GM12878 (cell line): ENCODE measurements at regions of chr6 and their contacts with region 1.

Region 1: DNA sequence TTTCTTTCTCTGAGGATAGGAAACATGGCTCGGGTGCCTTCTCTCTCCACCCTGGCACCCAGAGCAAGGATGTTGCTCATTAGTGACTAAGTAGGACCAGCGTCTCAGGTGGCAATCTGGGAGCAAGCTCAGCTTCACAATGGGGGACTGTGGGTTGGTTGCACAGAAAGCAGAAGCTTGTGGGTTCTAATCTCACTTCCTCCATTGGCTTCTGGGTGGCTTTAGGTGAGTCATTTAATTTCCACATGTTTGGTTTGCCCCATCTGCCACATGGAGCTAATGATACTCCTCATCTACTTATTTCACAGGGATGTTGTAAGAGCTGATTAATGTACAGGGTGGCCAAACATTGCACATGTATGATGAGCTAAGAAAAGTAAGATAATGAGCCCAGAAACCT is 54.8 kb upstream of the AKIRIN2 start:
- DNase-seq: peak; percentile 97
- ATAC-seq: peak; percentile 93
- H3K4me3 ChIP-seq: no peak overlapping the region
- H3K27ac ChIP-seq: peak overlapping the region; percentile 75
- H3K4me1 ChIP-seq: peaks cover 37% of the 10 kb centered on the region
- H3K27me3 ChIP-seq: no peaks in the 10 kb centered on the region
- CTCF ChIP-seq: no peak
- EP300 ChIP-seq: peak; percentile 90 to 93
- POLR2A ChIP-seq: no peak
- RAD21 ChIP-seq: peak; percentile 16; the same call in 1 of the 2 replicates

Region 2: DNA sequence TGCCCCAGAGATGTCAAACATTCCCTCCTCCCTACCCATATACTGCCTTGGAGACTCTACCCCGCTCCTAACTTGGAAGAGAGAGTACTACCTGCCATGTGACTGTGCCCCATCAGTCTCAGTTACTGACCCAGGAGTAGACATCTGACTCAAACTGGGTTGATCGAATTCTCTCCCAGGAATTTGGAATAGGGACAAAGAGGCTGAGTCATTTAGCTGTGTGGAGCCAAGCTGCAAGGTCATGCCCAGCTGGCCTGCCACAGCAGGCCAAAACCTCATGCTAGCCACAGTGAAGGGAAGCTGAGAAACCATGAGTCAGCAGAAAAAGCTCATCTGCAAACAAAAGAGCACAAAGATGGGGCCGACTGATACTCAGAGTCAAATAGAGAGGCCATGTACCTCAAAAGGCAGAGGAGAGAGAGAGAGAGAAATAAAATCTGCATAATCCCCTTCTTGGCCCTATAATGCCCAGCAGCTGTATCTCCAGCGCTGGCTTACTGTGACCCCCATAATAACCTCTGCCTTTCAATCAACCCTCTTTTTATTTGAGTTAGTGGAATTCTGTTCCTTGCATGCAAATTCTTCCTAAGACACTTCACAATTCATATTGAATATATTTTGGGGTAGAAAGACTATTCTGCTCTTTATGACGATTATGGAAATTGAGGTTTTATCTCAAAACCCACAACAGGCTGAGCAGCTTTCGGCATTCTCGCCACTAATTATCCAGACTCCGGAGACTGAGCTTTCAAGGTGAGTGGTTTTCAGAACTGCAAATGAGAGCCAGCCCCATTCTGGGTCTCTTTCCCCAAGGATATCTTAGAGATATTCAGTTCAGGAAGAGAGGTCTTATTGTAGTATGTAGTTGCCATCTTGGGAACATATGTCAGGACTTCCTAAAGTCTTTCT is 33.4 kb before region 1 on chr6:
- CTCF ChIA-PET with region 1: interaction called, 6 read pairs
- POLR2A ChIA-PET with region 1: interaction called, 16 read pairs
- RAD21 ChIA-PET with region 1: interaction called, 15 read pairs
- SMC1A ChIA-PET with region 1: interaction called, 18 read pairs
- in situ Hi-C with region 1: no loop called
- intact Hi-C with region 1: no loop called
- DNase-seq: peak; percentile 77
- ATAC-seq: peak; percentile 77
- H3K4me3 ChIP-seq: peak overlapping the region; percentile 23; the same call in 1 of the 2 replicates
- H3K27ac ChIP-seq: peak overlapping the region; percentile 92
- H3K4me1 ChIP-seq: peaks cover 38% of the 10 kb centered on the region
- H3K27me3 ChIP-seq: no peaks in the 10 kb centered on the region
- CTCF ChIP-seq: no peak
- EP300 ChIP-seq: peak; percentile 26 to 49; a peak in 2 of 4 replicates
- POLR2A ChIP-seq: no peak
- RAD21 ChIP-seq: no peak

Region 3: DNA sequence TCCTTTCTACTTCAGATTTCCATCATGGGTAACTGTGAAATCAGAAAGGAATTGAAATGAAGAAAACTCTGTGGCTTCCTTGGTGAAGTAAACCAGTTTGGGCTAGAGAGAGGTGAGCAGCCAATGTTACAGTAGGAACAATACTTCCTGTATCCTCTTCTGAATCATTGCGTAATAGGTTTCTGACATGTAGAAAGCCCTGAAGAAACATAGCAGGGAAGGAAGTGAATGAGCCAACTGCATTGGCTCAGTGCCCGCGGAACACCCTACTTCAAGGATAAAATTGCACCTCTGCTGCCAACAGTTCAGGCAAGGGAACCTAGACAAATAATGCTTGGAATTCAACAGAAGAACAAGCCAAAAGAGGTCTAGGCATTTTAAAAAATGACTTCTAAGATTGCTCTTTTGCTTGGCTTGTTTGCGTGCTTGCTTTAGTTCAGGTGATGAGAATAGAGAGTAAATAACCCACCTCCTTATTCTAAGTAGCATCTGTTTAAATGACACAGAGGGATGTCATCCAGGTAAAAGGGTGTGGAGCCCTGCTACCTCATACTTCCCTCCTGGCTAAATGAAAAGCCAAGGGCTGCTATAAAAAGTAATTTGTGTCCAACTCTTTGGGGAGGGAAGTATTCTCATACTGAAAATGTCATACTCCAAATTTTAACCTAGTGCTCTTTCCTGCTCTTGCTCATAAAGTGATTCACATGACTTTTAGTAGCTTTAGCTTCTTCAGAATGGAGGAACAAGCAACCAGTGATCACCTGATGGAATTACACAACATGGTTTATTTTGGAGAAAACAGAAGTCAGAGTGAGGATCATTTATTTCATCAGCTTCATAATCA is 24.8 kb before region 1 on chr6:
- CTCF ChIA-PET with region 1: interaction called, 3 read pairs
- POLR2A ChIA-PET with region 1: interaction called, 19 read pairs
- RAD21 ChIA-PET with region 1: interaction called, 9 read pairs
- SMC1A ChIA-PET with region 1: interaction called, 62 read pairs
- in situ Hi-C with region 1: no loop called
- intact Hi-C with region 1: loop called (anchors 2 kb)
- DNase-seq: peak; percentile 71
- ATAC-seq: peak; percentile 87
- H3K4me3 ChIP-seq: peak overlapping the region; percentile 9; the same call in 1 of the 2 replicates
- H3K27ac ChIP-seq: peak overlapping the region; percentile 89
- H3K4me1 ChIP-seq: peaks cover 37% of the 10 kb centered on the region
- H3K27me3 ChIP-seq: no peaks in the 10 kb centered on the region
- CTCF ChIP-seq: no peak
- EP300 ChIP-seq: peak in 1 of 2 experiments; percentile 27; a peak in 1 of 4 replicates
- POLR2A ChIP-seq: 0 out of 2 replicates have a peak, but pooled peaks have one; percentile 22
- RAD21 ChIP-seq: 0 out of 2 replicates have a peak, but pooled peaks have one; percentile 2

Region 4: GRCh38 chr6:87742106-87742505 is 14.8 kb before region 1 on chr6:
- CTCF ChIA-PET with region 1: interaction called, 10 read pairs
- POLR2A ChIA-PET with region 1: interaction called, 5 read pairs
- RAD21 ChIA-PET with region 1: interaction called, 11 read pairs
- SMC1A ChIA-PET with region 1: interaction called, 62 read pairs
- in situ Hi-C with region 1: no loop called
- intact Hi-C with region 1: no loop called
- DNase-seq: no peak
- ATAC-seq: peak; percentile 81
- H3K4me3 ChIP-seq: no peak overlapping the region
- H3K27ac ChIP-seq: 0 out of 2 replicates have a peak overlapping the region, but pooled peaks have one; percentile 4
- H3K4me1 ChIP-seq: peaks cover 23% of the 10 kb centered on the region
- H3K27me3 ChIP-seq: no peaks in the 10 kb centered on the region
- CTCF ChIP-seq: no peak
- EP300 ChIP-seq: no peak; a peak in 1 of 4 replicates
- POLR2A ChIP-seq: no peak
- RAD21 ChIP-seq: no peak

Region 5: GRCh38 chr6:87772597-87773530 is 16.0 kb after region 1 on chr6:
- CTCF ChIA-PET with region 1: no interaction called
- POLR2A ChIA-PET with region 1: interaction called, 4 read pairs
- RAD21 ChIA-PET with region 1: interaction called, 6 read pairs
- SMC1A ChIA-PET with region 1: interaction called, 15 read pairs
- in situ Hi-C with region 1: no loop called
- intact Hi-C with region 1: no loop called
- DNase-seq: no peak
- ATAC-seq: no peak
- H3K4me3 ChIP-seq: no peak overlapping the region
- H3K27ac ChIP-seq: no peak overlapping the region
- H3K4me1 ChIP-seq: no peaks in the 10 kb centered on the region
- H3K27me3 ChIP-seq: no peaks in the 10 kb centered on the region
- CTCF ChIP-seq: no peak
- EP300 ChIP-seq: no peak
- POLR2A ChIP-seq: no peak
- RAD21 ChIP-seq: no peak

Region 6: GRCh38 chr6:87799651-87800050 is 42.8 kb after region 1 on chr6:
- CTCF ChIA-PET with region 1: interaction called, 6 read pairs
- POLR2A ChIA-PET with region 1: interaction called, 17 read pairs
- RAD21 ChIA-PET with region 1: interaction called, 44 read pairs
- SMC1A ChIA-PET with region 1: interaction called, 56 read pairs
- in situ Hi-C with region 1: no loop called
- intact Hi-C with region 1: loop called (anchors 2 kb)
- DNase-seq: no peak
- ATAC-seq: peak; percentile 29
- H3K4me3 ChIP-seq: no peak overlapping the region
- H3K27ac ChIP-seq: peak overlapping the region; percentile 36; the same call in 1 of the 2 replicates
- H3K4me1 ChIP-seq: peaks cover 34% of the 10 kb centered on the region
- H3K27me3 ChIP-seq: no peaks in the 10 kb centered on the region
- CTCF ChIP-seq: no peak
- EP300 ChIP-seq: no peak
- POLR2A ChIP-seq: no peak
- RAD21 ChIP-seq: no peak

Region 7: GRCh38 chr6:87922947-87923330 is 166.1 kb after region 1 on chr6:
- CTCF ChIA-PET with region 1: no interaction called
- POLR2A ChIA-PET with region 1: no interaction called
- RAD21 ChIA-PET with region 1: interaction called, 10 read pairs
- SMC1A ChIA-PET with region 1: interaction called, 4 read pairs
- in situ Hi-C with region 1: no loop called
- intact Hi-C with region 1: loop called (anchors 10 kb)
- DNase-seq: peak; percentile 86
- ATAC-seq: peak; percentile 75
- H3K4me3 ChIP-seq: no peak overlapping the region
- H3K27ac ChIP-seq: peak overlapping the region; percentile 94
- H3K4me1 ChIP-seq: peaks cover 71% of the 10 kb centered on the region
- H3K27me3 ChIP-seq: no peaks in the 10 kb centered on the region
- CTCF ChIP-seq: no peak
- EP300 ChIP-seq: peak; percentile 84 to 90
- POLR2A ChIP-seq: peak; percentile 34; the same call in 1 of the 2 replicates
- RAD21 ChIP-seq: no peak

Region 8: GRCh38 chr6:88031550-88031949 is 274.7 kb after region 1 on chr6:
- CTCF ChIA-PET with region 1: no interaction called
- POLR2A ChIA-PET with region 1: no interaction called
- RAD21 ChIA-PET with region 1: no interaction called
- SMC1A ChIA-PET with region 1: no interaction called
- in situ Hi-C with region 1: no loop called
- intact Hi-C with region 1: no loop called
- DNase-seq: no peak
- ATAC-seq: no peak
- H3K4me3 ChIP-seq: no peak overlapping the region
- H3K27ac ChIP-seq: no peak overlapping the region
- H3K4me1 ChIP-seq: no peaks in the 10 kb centered on the region
- H3K27me3 ChIP-seq: no peaks in the 10 kb centered on the region
- CTCF ChIP-seq: no peak
- EP300 ChIP-seq: no peak
- POLR2A ChIP-seq: no peak
- RAD21 ChIP-seq: no peak